ENCODE measurements at regions of chr18 and their contacts with region 1.

Region 1: GRCh38 chr18:4068552-4069158 is 386.5 kb downstream of the DLGAP1 start:
- DNase-seq: peak; percentile 56
- ATAC-seq: peak; percentile 91
- H3K4me3 ChIP-seq: no peak overlapping the region
- H3K27ac ChIP-seq: no peak overlapping the region
- H3K4me1 ChIP-seq: no peaks in the 10 kb centered on the region
- H3K27me3 ChIP-seq: no peaks in the 10 kb centered on the region
- CTCF ChIP-seq: peak; percentile 61
- POLR2A ChIP-seq: no peak
- RAD21 ChIP-seq: peak; percentile 55

Region 2: GRCh38 chr18:3722320-3723000 is 346.2 kb before region 1 on chr18:
- CTCF ChIA-PET with region 1: no interaction called
- POLR2A ChIA-PET with region 1: no interaction called
- dilution Hi-C with region 1: no loop called
- in situ Hi-C with region 1: no loop called
- intact Hi-C with region 1: loop called (anchors 2 kb)
- DNase-seq: no peak
- ATAC-seq: peak; percentile 10; the same call in 1 of the 2 replicates
- H3K4me3 ChIP-seq: no peak overlapping the region
- H3K27ac ChIP-seq: peak overlapping the region; percentile 86; the same call in 1 of the 2 replicates
- H3K4me1 ChIP-seq: peaks cover 14% of the 10 kb centered on the region
- H3K27me3 ChIP-seq: peaks cover 2% of the 10 kb centered on the region; the same call in 1 of the 2 replicates
- CTCF ChIP-seq: no peak
- POLR2A ChIP-seq: no peak
- RAD21 ChIP-seq: no peak

Region 3: GRCh38 chr18:3995476-3996102 is 73.1 kb before region 1 on chr18:
- CTCF ChIA-PET with region 1: no interaction called
- POLR2A ChIA-PET with region 1: no interaction called
- dilution Hi-C with region 1: no loop called
- in situ Hi-C with region 1: no loop called
- intact Hi-C with region 1: loop called (anchors 2 kb)
- DNase-seq: peak; percentile 82
- ATAC-seq: peak; percentile 72
- H3K4me3 ChIP-seq: no peak overlapping the region
- H3K27ac ChIP-seq: no peak overlapping the region
- H3K4me1 ChIP-seq: no peaks in the 10 kb centered on the region
- H3K27me3 ChIP-seq: no peaks in the 10 kb centered on the region
- CTCF ChIP-seq: peak; percentile 80
- POLR2A ChIP-seq: no peak
- RAD21 ChIP-seq: peak; percentile 76

Region 4: GRCh38 chr18:4299395-4299794 is 230.7 kb after region 1 on chr18:
- CTCF ChIA-PET with region 1: no interaction called
- POLR2A ChIA-PET with region 1: no interaction called
- dilution Hi-C with region 1: no loop called
- in situ Hi-C with region 1: no loop called
- intact Hi-C with region 1: no loop called
- DNase-seq: no peak
- ATAC-seq: no peak
- H3K4me3 ChIP-seq: no peak overlapping the region
- H3K27ac ChIP-seq: no peak overlapping the region
- H3K4me1 ChIP-seq: no peaks in the 10 kb centered on the region
- H3K27me3 ChIP-seq: no peaks in the 10 kb centered on the region
- CTCF ChIP-seq: no peak
- POLR2A ChIP-seq: no peak
- RAD21 ChIP-seq: no peak

Region 5: GRCh38 chr18:4384932-4385331 is 316.3 kb after region 1 on chr18:
- CTCF ChIA-PET with region 1: no interaction called
- POLR2A ChIA-PET with region 1: no interaction called
- dilution Hi-C with region 1: no loop called
- in situ Hi-C with region 1: no loop called
- intact Hi-C with region 1: no loop called
- DNase-seq: no peak
- ATAC-seq: no peak
- H3K4me3 ChIP-seq: no peak overlapping the region
- H3K27ac ChIP-seq: no peak overlapping the region
- H3K4me1 ChIP-seq: no peaks in the 10 kb centered on the region
- H3K27me3 ChIP-seq: no peaks in the 10 kb centered on the region
- CTCF ChIP-seq: no peak
- POLR2A ChIP-seq: no peak
- RAD21 ChIP-seq: no peak